Activated CD8-positive, alpha-beta T cell treated with anti-CD3 and anti-CD28 coated beads for 36 hours (primary cell): ENCODE measurements at regions of chr1 and their contacts with region 1.

Region 1: DNA sequence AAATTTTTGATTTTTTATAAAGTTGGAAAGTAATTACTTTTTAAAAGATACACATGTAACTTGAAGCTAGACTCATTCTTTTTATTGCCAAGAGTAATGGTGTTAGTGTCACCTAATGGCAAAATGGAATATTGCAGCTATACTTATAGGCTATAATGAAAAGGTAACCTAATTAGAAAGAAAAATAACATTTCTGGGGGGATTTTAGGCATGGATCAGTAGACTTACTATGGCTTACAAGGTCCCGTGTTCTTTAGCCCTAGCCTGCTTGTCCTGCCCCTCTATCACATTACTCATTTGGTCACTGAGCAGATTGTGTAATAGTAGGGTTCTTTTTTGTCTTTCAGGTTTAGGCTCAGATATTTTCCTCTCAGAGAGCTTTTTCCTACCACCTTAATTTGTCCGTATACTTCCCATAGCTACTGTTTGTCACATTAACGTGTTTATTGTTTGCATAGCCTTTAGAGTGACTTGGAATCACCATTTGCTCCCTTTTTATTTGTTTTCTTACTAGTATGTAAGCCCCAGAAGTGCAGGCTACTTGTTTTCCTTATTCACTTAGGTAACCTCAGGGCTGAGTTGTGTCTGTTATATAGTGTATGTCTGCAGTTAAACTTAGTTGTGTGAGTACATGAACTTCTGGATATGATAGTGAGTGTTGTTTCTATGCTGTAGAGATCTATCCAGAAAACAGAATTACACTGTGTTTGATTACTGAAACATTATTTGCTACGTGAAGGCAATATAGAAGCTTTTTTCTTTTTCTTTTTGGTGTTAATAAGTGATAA is 58.7 kb downstream of the RABGAP1L start:
- DNase-seq: no peak
- ATAC-seq: peak; percentile 72
- H3K4me3 Mint-ChIP-seq: no peak overlapping the region
- H3K27ac Mint-ChIP-seq: no peak overlapping the region
- H3K4me1 Mint-ChIP-seq: peaks cover 4% of the 10 kb centered on the region
- H3K27me3 Mint-ChIP-seq: no peaks in the 10 kb centered on the region
- CTCF ChIP-seq: peak; percentile 84

Region 2: GRCh38 chr1:173669491-173669941 is 548.5 kb before region 1 on chr1 and contains the start of gene ANKRD45:
- CTCF ChIA-PET with region 1: no interaction called
- POLR2A ChIA-PET with region 1: no interaction called
- intact Hi-C with region 1: no loop called
- DNase-seq: peak; percentile 43
- ATAC-seq: peak; percentile 47
- H3K4me3 Mint-ChIP-seq: peak within 1 kb of the TSS; percentile 32
- H3K27ac Mint-ChIP-seq: no peak within 1 kb of the TSS
- H3K4me1 Mint-ChIP-seq: peaks cover 5% of the 10 kb centered on the region
- H3K27me3 Mint-ChIP-seq: peaks cover 21% of the 10 kb centered on the region
- CTCF ChIP-seq: no peak
- total RNA-seq, gene ANKRD45: not detected

Region 3: DNA sequence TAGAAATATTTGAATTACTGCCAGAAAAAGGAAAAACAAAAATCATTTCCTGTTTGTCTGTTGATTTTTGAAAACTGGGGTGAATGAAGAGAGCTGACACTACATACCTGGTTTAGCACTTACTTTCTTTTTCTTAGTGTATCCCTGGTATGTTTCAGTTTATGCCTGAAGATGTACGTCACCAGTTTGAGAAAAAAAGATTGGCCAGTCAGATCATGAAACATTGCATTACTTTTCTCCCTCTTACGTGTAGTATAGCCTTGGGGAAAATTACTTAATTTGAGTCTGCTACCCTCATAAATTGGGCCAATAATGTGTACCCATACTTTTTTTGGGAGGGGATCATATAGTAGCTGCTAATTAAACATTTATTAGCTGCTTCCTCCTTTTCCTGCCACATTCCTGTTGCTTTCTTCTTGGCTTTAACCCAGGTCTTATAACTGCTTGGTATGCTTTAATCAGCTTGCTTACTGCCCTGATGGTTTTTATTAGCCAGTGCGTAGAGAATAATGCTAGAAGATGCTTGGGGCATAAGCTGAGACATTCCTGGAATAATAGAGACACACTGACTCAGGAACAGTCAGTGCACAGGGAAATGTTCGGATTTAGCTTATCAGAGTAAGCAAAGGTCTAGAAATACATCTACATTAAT is 26.6 kb before region 1 on chr1:
- CTCF ChIA-PET with region 1: interaction called, 16 read pairs
- POLR2A ChIA-PET with region 1: no interaction called
- intact Hi-C with region 1: no loop called
- DNase-seq: no peak
- ATAC-seq: peak; percentile 42
- H3K4me3 Mint-ChIP-seq: no peak overlapping the region
- H3K27ac Mint-ChIP-seq: no peak overlapping the region
- H3K4me1 Mint-ChIP-seq: peaks cover 46% of the 10 kb centered on the region
- H3K27me3 Mint-ChIP-seq: no peaks in the 10 kb centered on the region
- CTCF ChIP-seq: no peak

Region 4: DNA sequence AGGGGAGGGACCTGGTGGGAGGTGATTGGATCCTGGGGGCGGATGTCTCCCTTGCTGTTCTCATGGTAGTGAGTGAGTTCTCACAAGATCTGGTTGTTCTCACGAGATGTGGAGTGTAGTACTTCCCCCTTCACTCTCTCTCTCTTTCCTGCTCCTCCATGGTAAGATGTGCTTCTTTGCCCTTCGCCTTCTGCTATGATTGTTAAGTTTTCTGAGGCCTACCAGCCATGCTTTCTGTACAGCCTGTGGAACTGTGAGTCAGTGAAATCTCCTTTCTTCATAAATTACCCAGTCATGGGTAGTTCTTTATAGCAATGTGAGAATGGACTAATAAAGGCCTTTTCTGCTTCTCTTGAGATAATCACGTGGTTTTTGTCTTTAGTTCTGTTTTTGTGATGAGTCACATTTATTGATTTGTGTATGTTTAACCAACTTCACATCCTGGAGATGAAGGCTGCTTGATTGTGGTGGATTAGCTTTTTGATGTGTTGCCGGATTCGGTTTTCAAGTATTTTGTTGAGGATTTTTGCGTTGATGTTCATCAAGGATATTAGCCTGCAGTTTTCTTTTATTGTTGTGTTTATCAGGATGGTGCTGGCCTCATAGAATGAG is 13.2 kb before region 1 on chr1:
- CTCF ChIA-PET with region 1: interaction called, 17 read pairs
- POLR2A ChIA-PET with region 1: no interaction called
- intact Hi-C with region 1: no loop called
- DNase-seq: peak; percentile 22
- ATAC-seq: peak; percentile 69
- H3K4me3 Mint-ChIP-seq: peak overlapping the region; percentile 50
- H3K27ac Mint-ChIP-seq: peak overlapping the region; percentile 85
- H3K4me1 Mint-ChIP-seq: peaks cover 56% of the 10 kb centered on the region
- H3K27me3 Mint-ChIP-seq: no peaks in the 10 kb centered on the region
- CTCF ChIP-seq: no peak